PC-9 (cell line): ENCODE measurements at regions of chr3 and their contacts with region 1.

Region 1: GRCh38 chr3:161498259-161498921 is 1.8 kb downstream of the OTOL1 start:
- DNase-seq: no peak
- H3K4me3 ChIP-seq: no peak overlapping the region
- H3K27ac ChIP-seq: no peak overlapping the region
- H3K4me1 ChIP-seq: no peaks in the 10 kb centered on the region
- H3K27me3 ChIP-seq: no peaks in the 10 kb centered on the region
- CTCF ChIP-seq: no peak

Region 2: GRCh38 chr3:161531930-161532329 is 33.5 kb after region 1 on chr3:
- CTCF ChIA-PET with region 1: no interaction called
- POLR2A ChIA-PET with region 1: no interaction called
- intact Hi-C with region 1: loop called (anchors 5 kb)
- DNase-seq: no peak
- H3K4me3 ChIP-seq: no peak overlapping the region
- H3K27ac ChIP-seq: no peak overlapping the region
- H3K4me1 ChIP-seq: no peaks in the 10 kb centered on the region
- H3K27me3 ChIP-seq: no peaks in the 10 kb centered on the region
- CTCF ChIP-seq: no peak